Aorta (tissue), 5 donors: ENCODE measurements at regions of chr10 and their contacts with region 1.

Region 1: GRCh38 chr10:120942806-120943413 is 91.7 kb downstream of the WDR11 start:
- DNase-seq: peak; percentile 84 to 95
- ATAC-seq: peak; percentile 92
- H3K4me3 ChIP-seq: no peak overlapping the region
- H3K27ac ChIP-seq: no peak overlapping the region
- H3K4me1 ChIP-seq: no peaks in the 10 kb centered on the region
- H3K27me3 ChIP-seq: no peaks in the 10 kb centered on the region

Region 2: DNA sequence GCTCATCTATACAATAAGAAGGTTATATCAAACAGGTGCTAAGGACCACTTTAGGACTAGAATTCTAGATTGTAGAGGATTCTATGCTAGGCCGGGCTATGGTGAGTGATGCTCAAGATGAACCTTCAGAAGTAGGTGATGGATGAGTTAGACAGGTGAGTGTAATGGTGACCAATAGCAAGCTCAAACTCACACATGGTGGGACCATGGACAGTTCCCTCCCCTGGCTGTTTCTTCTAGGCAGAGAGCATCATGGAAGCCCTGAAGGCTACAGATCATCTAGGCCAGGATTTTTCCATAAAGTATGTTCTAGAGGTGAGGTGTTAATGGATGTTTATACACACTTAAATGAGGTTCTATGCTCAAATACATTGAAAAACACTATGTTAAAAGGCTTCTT is 254.0 kb before region 1 on chr10:
- intact Hi-C with region 1: no loop called
- DNase-seq: no peak
- ATAC-seq: no peak
- H3K4me3 ChIP-seq: no peak overlapping the region
- H3K27ac ChIP-seq: no peak overlapping the region
- H3K4me1 ChIP-seq: no peaks in the 10 kb centered on the region
- H3K27me3 ChIP-seq: no peaks in the 10 kb centered on the region

Region 3: GRCh38 chr10:121063744-121064143 is 120.8 kb after region 1 on chr10:
- intact Hi-C with region 1: no loop called
- DNase-seq: no peak
- ATAC-seq: no peak
- H3K4me3 ChIP-seq: no peak overlapping the region
- H3K27ac ChIP-seq: no peak overlapping the region
- H3K4me1 ChIP-seq: no peaks in the 10 kb centered on the region
- H3K27me3 ChIP-seq: no peaks in the 10 kb centered on the region

Region 4: GRCh38 chr10:121734589-121735045 is 791.7 kb after region 1 on chr10:
- intact Hi-C with region 1: loop called (anchors 2 kb)
- DNase-seq: no peak
- ATAC-seq: peak; percentile 40
- H3K4me3 ChIP-seq: no peak overlapping the region
- H3K27ac ChIP-seq: no peak overlapping the region
- H3K4me1 ChIP-seq: no peaks in the 10 kb centered on the region
- H3K27me3 ChIP-seq: no peaks in the 10 kb centered on the region

Region 5: DNA sequence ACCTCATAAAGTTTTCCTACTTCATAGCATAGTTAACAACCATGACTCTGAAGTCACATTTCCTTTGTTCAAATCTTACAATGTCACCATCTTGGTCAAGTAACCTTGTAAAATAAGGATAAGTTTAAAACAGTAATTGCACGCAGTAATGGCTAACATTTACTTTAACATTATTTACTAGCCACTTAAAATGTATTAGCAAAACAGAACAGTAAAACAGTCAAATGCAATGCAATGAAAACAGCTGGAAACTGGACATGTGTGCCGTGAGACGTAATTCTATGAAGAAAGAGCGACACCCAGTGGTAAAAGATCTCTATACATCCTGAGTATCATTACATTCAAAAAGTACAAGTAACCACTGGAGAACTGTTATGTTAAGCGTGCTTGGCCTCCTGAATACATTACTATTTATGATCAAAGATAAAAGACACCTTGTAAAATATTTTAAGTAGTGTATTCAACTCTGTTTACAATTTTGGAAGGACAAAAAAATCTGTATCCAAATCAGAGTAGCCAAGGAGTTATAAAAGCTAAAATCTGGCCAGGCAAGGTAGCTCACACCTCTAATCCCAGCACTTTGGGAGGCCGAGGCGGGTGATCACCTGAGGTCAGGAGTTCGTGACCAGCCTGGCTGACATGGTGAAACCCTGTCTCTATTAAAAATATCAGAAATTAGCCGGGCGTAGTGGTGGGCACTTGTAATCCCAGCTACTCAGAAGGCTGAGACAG is 957.7 kb after region 1 on chr10:
- intact Hi-C with region 1: loop called in 1 of 2 experiments (anchors 5 kb)
- DNase-seq: no peak
- ATAC-seq: no peak
- H3K4me3 ChIP-seq: no peak overlapping the region
- H3K27ac ChIP-seq: no peak overlapping the region
- H3K4me1 ChIP-seq: no peaks in the 10 kb centered on the region
- H3K27me3 ChIP-seq: no peaks in the 10 kb centered on the region